ENCODE measurements at regions of chr13 and their contacts with region 1.

Region 1: DNA sequence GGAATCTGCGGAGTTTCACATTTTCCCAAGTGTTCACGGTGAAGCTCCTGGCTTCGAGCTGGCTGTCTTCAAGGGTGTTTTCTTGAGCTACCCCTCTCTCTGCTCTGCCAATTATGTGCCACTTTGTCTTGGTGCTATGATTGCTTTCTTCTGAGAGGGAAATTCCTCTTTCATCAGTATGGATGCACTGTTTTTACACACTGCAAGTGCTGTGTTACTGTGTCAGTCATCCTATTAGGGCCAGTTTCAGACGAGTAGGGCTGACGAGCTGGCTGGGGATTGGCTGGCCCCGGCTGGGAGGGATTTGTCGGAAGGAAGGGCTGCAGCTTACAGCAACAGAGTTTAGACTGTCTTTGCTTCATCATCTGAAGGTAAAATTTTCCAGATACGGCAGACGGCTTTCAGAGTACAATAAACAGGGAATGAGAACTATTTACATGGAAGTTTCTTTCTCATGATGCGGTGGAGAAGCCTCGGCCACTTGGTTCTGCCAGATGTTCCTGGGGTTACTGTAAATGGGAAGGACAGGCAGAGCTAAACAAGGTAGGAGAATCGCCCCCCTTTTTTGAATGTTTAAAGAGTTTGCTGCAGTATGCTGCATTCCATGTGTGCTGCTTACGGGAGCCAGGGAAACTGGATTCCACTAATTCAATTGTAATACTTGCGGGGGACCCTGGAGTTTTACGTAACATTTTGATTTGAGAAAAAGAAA is at the start of gene MBNL2:
- DNase-seq: peak; percentile 58 to 94 (median 86)
- ATAC-seq: peak; percentile 96 to 98 (median 98)
- H3K4me3 ChIP-seq: peak within 1 kb of the TSS; percentile 58 to 74
- H3K4me3 Mint-ChIP-seq: peak within 1 kb of the TSS; percentile 79 to 93 (median 85)
- H3K27ac ChIP-seq: peak within 1 kb of the TSS; percentile 89
- H3K27ac Mint-ChIP-seq: peak within 1 kb of the TSS; percentile 79 to 97
- H3K4me1 ChIP-seq: peaks cover 28 to 32% of the 10 kb centered on the region in 2 experiments
- H3K4me1 Mint-ChIP-seq: peaks cover 39 to 49% (median 44%) of the 10 kb centered on the region in 3 donors
- H3K27me3 ChIP-seq: no peaks in the 10 kb centered on the region
- H3K27me3 Mint-ChIP-seq: no peaks in the 10 kb centered on the region
- total RNA-seq, gene MBNL2: 21.0 to 33.7 (median 28.5) TPM

Region 2: DNA sequence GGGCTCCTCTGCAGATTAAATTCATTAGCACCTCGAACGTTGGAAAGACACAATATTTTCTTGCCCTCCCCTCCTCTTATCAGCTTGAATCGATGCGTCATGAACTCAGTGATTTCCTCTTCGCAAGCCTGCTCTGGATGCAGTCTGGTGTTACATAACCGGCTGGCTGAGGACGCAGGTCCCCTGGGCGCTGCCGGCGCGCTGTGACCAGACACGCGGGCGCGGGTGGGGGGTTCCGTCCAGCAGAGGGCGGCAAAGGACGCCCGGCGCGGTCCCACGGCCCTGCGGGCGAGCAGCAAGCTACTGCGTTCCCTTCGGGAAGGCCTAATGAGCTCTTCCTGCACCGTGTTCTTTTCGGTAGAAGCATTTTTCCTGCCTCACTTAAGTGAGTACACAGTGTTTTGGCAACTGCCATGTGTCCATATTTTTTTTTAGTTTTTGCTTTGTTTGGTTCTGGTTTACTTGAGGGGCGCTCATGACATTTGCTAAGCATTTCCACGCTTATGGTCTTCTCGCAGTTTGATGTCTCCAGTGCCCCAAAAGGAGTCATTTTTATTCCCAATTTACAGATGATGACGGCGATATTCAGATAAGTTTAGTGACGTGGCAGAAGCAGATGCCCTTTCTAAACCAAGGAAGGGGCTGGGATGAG is 112.2 kb before region 1 on chr13:
- CTCF ChIA-PET with region 1: interaction called, 3 to 26 read pairs
- POLR2A ChIA-PET with region 1: interaction called, 5 read pairs
- DNase-seq: peak; percentile 37 to 86 (median 71)
- ATAC-seq: peak; percentile 90 to 94 (median 92)
- H3K4me3 ChIP-seq: peak overlapping the region in 1 of 2 donors; percentile 5
- H3K4me3 Mint-ChIP-seq: peak overlapping the region in 1 of 3 donors; percentile 24
- H3K27ac ChIP-seq: no peak overlapping the region
- H3K27ac Mint-ChIP-seq: peak overlapping the region in 1 of 2 donors; percentile 59
- H3K4me1 ChIP-seq: peaks cover 0 to 14% of the 10 kb centered on the region in 2 experiments
- H3K4me1 Mint-ChIP-seq: peaks cover 13 to 19% (median 14%) of the 10 kb centered on the region in 3 donors
- H3K27me3 ChIP-seq: peaks cover 0 to 13% of the 10 kb centered on the region in 2 experiments
- H3K27me3 Mint-ChIP-seq: peaks cover 6 to 7% of the 10 kb centered on the region in 2 donors

Region 3: GRCh38 chr13:97278435-97279411 is 56.6 kb after region 1 on chr13:
- CTCF ChIA-PET with region 1: interaction called in 1 of 2 experiments, 4 read pairs
- POLR2A ChIA-PET with region 1: interaction called in 1 of 2 experiments, 10 read pairs
- DNase-seq: no peak
- ATAC-seq: no peak
- H3K4me3 ChIP-seq: no peak overlapping the region
- H3K4me3 Mint-ChIP-seq: no peak overlapping the region
- H3K27ac ChIP-seq: no peak overlapping the region
- H3K27ac Mint-ChIP-seq: no peak overlapping the region
- H3K4me1 ChIP-seq: peaks cover 0 to 2% of the 10 kb centered on the region in 2 experiments
- H3K4me1 Mint-ChIP-seq: peaks cover 56 to 75% (median 66%) of the 10 kb centered on the region in 3 donors
- H3K27me3 ChIP-seq: no peaks in the 10 kb centered on the region
- H3K27me3 Mint-ChIP-seq: no peaks in the 10 kb centered on the region

Region 4: DNA sequence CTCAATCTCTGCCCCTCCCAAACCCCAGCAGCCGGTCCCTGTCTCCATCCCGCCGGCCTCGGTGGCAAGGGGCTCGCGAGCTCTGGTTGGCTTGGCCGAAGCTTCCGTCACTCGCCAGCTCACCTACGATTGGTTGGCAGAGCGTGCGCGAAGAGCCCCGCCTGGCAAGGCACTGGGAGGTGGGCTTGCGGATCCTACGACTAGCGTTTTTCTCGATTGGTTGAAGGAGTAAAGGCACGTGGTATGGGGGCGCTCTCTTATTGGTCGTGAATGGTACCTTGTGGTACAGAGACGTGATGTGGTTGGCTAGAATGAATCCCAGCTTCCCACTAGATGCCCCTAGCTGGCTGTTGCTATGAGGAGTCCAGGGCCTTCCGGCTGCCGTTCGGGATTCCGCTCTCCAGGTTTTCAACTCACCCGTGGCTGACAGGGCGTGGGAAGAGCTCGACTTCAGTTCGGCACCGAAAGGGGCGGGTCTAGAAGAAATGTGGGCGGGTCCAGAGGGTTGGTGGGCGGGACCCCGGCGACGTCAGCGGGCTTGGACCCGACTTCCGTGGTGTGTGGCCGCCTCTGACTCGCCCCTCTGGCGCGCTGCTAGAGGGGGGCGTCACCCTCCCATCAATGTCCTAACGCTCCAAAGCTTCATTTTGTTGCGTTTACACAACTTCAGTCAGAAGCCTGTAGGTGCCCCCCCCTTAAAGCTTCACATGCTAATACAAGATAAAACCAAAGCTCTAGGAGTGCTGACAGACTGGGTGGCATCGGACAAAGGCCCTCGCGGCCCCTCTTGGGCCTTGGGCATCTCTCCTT is 211.0 kb after region 1 on chr13:
- CTCF ChIA-PET with region 1: interaction called in 1 of 2 experiments, 10 read pairs
- POLR2A ChIA-PET with region 1: interaction called, 7 to 63 read pairs
- DNase-seq: peak; percentile 92 to 100 (median 97)
- ATAC-seq: peak; percentile 74 to 79 (median 74)
- H3K4me3 ChIP-seq: peak overlapping the region; percentile 82 to 97
- H3K4me3 Mint-ChIP-seq: peak overlapping the region; percentile 92 to 97 (median 93)
- H3K27ac ChIP-seq: peak overlapping the region; percentile 98
- H3K27ac Mint-ChIP-seq: peak overlapping the region; percentile 99 to 100
- H3K4me1 ChIP-seq: peaks cover 2 to 21% of the 10 kb centered on the region in 2 experiments
- H3K4me1 Mint-ChIP-seq: peaks cover 31 to 35% (median 34%) of the 10 kb centered on the region in 3 donors
- H3K27me3 ChIP-seq: no peaks in the 10 kb centered on the region
- H3K27me3 Mint-ChIP-seq: peaks cover 5 to 7% of the 10 kb centered on the region in 2 donors

Region 5: DNA sequence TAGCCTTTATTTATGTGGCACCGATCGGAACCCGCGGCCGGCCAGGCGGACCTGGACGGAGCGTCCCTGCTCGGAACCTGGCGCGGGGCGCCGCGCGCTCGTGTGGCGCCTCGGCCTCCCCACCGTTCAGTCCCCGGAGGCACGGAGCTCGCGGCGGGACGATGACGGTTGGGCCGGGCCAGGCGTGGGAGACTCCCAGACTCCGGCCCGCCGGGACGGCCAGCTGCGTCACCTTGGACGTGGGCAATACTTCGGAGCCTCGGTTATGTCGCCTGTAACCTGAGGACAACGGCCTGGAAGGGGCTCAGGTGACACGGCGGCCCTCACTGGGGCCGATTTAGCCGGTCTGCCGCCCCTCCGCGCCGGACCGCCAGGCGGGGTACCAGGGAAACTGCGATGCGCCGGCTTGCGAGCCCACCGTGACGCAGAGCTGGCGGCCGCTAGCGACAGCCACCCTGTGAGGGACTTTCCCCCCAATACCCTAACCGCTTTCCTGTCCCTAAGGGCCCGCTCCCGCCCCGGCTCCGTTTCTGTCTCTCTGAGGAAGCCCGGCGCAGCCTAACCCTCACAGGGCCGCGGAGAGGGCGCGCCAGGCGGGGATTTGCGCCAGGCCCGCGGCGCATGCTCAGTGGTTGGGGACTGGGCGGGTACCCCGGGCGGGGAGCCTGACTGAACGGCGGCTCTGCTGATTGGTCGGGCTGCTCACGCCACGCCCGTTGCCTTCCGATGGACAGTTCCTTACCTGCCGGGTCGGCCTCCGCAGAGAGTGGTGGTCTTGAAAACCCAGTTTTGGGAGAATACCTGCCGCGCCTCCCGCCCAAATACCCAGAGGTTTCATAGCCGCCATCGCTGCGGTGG is 1865.2 kb after region 1 on chr13:
- CTCF ChIA-PET with region 1: no interaction called
- POLR2A ChIA-PET with region 1: interaction called in 1 of 2 experiments, 13 read pairs
- DNase-seq: peak; percentile 84 to 95 (median 90)
- ATAC-seq: peak; percentile 79 to 81 (median 80)
- H3K4me3 ChIP-seq: peak overlapping the region; percentile 75 to 87
- H3K4me3 Mint-ChIP-seq: peak overlapping the region; percentile 94 to 99 (median 98)
- H3K27ac ChIP-seq: peak overlapping the region; percentile 98
- H3K27ac Mint-ChIP-seq: peak overlapping the region; percentile 98 to 99
- H3K4me1 ChIP-seq: peaks cover 16 to 32% of the 10 kb centered on the region in 2 experiments
- H3K4me1 Mint-ChIP-seq: peaks cover 39 to 46% (median 43%) of the 10 kb centered on the region in 3 donors
- H3K27me3 ChIP-seq: no peaks in the 10 kb centered on the region
- H3K27me3 Mint-ChIP-seq: no peaks in the 10 kb centered on the region